ENCODE measurements at regions of chr14 and their contacts with region 1.

Region 1: GRCh38 chr14:96567289-96567899 is 65.2 kb downstream of the PAPOLA start:
- DNase-seq: no peak
- H3K4me3 ChIP-seq: no peak overlapping the region
- H3K27ac ChIP-seq: no peak overlapping the region
- H3K4me1 ChIP-seq: peaks cover 0 to 3% (median 0%) of the 10 kb centered on the region in 4 donors
- H3K27me3 ChIP-seq: no peaks in the 10 kb centered on the region
- CTCF ChIP-seq: peak in 3 of 4 experiments; percentile 30 to 40 (median 37)
- EP300 ChIP-seq: no peak
- POLR2A ChIP-seq: no peak

Region 2: GRCh38 chr14:96320605-96321004 is 246.8 kb before region 1 on chr14:
- intact Hi-C with region 1: loop called (anchors 10 kb)
- DNase-seq: no peak
- H3K4me3 ChIP-seq: no peak overlapping the region
- H3K27ac ChIP-seq: no peak overlapping the region
- H3K4me1 ChIP-seq: no peaks in the 10 kb centered on the region
- H3K27me3 ChIP-seq: no peaks in the 10 kb centered on the region
- CTCF ChIP-seq: no peak
- EP300 ChIP-seq: no peak
- POLR2A ChIP-seq: no peak

Region 3: DNA sequence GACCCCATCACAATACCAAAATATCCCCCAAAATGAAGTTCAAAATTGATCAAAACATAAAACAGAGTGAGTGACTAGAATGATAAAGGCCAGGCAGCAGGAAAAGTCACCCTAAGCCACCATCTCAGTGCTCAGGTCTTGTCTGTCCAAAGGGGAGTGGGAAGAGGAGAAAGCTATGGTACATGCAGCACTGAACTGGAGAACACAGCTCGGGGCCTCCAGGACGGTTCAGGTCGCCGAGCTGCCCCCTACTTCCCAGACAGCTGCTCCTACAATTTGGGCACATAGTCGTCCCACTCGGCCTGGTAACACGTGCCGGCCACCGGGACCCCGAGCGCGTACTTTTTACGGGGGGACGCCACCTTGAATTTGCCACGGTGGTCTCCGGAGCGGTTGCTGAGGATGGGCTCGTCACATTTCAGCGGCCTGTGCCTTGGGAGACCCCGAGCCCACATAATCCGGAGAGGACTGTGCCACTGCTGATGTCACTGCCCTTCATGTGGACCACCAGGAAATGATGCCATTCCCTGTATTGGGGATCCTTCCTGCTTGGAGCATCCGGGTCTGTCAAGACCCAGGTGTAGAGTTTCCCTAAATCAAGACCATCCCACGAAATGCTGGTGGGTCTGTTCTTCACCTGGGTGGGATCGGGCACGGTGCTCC is 143.8 kb before region 1 on chr14:
- intact Hi-C with region 1: no loop called
- DNase-seq: no peak
- H3K4me3 ChIP-seq: peak overlapping the region in 3 of 4 donors; percentile 35 to 46 (median 44)
- H3K27ac ChIP-seq: no peak overlapping the region
- H3K4me1 ChIP-seq: peaks cover 0 to 9% (median 7%) of the 10 kb centered on the region in 4 donors
- H3K27me3 ChIP-seq: peaks cover 0 to 7% (median 0%) of the 10 kb centered on the region in 3 donors
- CTCF ChIP-seq: no peak
- EP300 ChIP-seq: no peak
- POLR2A ChIP-seq: no peak

Region 4: GRCh38 chr14:96434040-96434787 is 133.2 kb before region 1 on chr14:
- intact Hi-C with region 1: no loop called
- DNase-seq: no peak
- H3K4me3 ChIP-seq: no peak overlapping the region
- H3K27ac ChIP-seq: no peak overlapping the region
- H3K4me1 ChIP-seq: no peaks in the 10 kb centered on the region
- H3K27me3 ChIP-seq: no peaks in the 10 kb centered on the region
- CTCF ChIP-seq: no peak
- EP300 ChIP-seq: no peak
- POLR2A ChIP-seq: no peak

Region 5: DNA sequence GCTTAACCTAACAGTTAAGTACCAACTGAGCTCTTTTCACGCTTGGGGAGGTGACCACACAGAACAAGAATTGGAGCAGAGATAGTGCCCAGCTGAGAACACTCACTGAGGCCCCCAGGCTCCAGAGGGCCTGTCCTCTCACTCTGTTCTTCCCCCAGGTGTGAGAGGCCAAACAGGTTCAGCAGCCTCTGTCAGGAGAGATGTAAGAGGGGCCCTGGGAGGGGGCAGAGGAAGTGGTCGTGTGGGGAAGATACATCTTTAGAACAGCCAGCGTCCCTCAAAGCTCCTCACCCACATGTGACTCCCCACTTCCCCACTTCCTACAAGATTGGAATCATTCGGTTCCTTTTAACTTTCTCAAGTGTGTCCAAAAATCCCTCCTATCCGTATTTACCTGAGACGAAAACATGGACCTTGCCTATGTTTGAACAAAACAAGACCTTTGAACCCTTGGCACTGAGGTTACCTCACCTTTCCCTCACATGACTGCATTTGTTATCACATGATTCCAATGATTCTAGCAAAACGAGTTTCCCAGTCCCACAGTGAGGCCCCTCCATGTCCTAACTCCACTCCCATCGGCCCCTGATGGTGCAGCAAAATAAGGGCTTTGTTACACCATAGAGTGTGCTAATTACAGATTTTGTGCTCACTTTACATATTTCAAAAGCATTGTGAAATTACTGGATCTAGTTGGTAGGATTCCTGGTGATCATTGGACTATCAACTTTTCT is 105.3 kb before region 1 on chr14:
- intact Hi-C with region 1: no loop called
- DNase-seq: no peak
- H3K4me3 ChIP-seq: no peak overlapping the region
- H3K27ac ChIP-seq: no peak overlapping the region
- H3K4me1 ChIP-seq: no peaks in the 10 kb centered on the region
- H3K27me3 ChIP-seq: no peaks in the 10 kb centered on the region
- CTCF ChIP-seq: no peak
- EP300 ChIP-seq: no peak
- POLR2A ChIP-seq: no peak

Region 6: GRCh38 chr14:96741151-96741977 is 174.0 kb after region 1 on chr14:
- intact Hi-C with region 1: loop called (anchors 1 kb)
- DNase-seq: peak; percentile 67
- H3K4me3 ChIP-seq: peak overlapping the region; percentile 4 to 46 (median 36)
- H3K27ac ChIP-seq: no peak overlapping the region
- H3K4me1 ChIP-seq: peaks cover 0 to 12% (median 9%) of the 10 kb centered on the region in 4 donors
- H3K27me3 ChIP-seq: peaks cover 13 to 90% (median 15%) of the 10 kb centered on the region in 3 donors
- CTCF ChIP-seq: peak; percentile 30 to 97 (median 50)
- EP300 ChIP-seq: no peak
- POLR2A ChIP-seq: no peak